ENCODE measurements at regions of chrX and their contacts with region 1.

Region 1: DNA sequence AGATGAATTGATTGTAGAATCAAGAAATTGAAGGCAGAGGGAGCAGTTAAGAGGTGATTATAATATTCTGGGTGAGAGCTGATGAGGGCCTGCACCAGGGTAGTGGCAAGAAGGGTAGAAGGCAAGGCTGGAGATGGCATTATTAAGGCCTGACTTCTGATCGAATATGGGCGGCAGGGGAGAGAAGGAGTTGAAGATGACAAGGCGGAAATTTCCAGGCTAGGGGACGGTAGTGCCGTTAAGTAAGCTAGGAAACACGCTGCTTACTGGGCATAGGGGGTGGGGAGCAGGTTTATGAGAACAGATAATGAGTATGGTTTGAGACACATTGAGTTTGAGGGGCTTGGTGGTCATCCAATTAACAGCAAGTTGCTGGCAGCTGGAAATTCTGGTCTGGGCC is 19.5 kb downstream of the BCORL1 start:
- DNase-seq: no peak
- CTCF ChIP-seq: no peak

Region 2: GRCh38 chrX:129925305-129926092 is 76.4 kb before region 1 on chrX:
- CTCF ChIA-PET with region 1: interaction called, 10 read pairs
- POLR2A ChIA-PET with region 1: no interaction called
- DNase-seq: peak; percentile 57
- CTCF ChIP-seq: peak; percentile 53

Region 3: GRCh38 chrX:130091958-130092522 is 90.1 kb after region 1 on chrX:
- CTCF ChIA-PET with region 1: no interaction called
- POLR2A ChIA-PET with region 1: no interaction called
- DNase-seq: peak; percentile 88
- CTCF ChIP-seq: peak; percentile 23